ENCODE measurements at regions of chr2 and their contacts with region 1.

Region 1: DNA sequence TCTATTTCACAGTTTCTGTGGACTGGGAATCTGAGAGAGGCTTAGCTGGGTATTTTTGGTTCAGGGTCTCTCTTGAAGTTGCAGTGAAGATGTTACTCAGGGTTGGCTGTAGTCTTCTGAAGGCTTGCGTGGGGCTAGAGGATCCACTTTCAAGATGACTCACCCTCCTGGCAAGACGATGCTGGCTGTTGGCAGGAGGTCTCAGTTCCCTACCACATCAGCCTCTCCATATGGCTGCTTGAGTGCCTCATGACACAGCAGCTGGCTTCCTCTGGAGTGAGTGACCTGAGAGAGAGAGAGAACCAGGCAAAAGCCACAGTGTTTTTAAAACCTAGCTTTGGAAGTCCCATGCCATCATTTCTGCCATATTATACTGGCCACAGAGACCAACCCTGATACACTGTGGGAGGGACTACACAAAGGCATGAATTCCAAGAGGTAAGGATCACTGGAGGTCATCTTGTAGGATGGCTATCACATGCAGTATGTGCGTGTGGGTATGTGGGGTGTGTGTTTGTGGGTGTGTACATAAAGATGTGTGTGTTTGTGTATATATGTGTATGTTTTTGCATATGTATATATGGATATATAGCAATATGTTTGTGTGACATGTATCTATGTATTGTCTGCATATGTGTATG is 25.1 kb downstream of the DNPEP start:
- DNase-seq: peak; percentile 34
- ATAC-seq: peak; percentile 87
- H3K4me3 ChIP-seq: no peak overlapping the region
- H3K27ac ChIP-seq: no peak overlapping the region
- H3K4me1 ChIP-seq: peaks cover 4% of the 10 kb centered on the region; the same call in 1 of the 2 replicates
- H3K27me3 ChIP-seq: no peaks in the 10 kb centered on the region; a peak in 1 of 4 replicates
- CTCF ChIP-seq: no peak
- EP300 ChIP-seq: no peak
- POLR2A ChIP-seq: no peak
- RAD21 ChIP-seq: no peak

Region 2: DNA sequence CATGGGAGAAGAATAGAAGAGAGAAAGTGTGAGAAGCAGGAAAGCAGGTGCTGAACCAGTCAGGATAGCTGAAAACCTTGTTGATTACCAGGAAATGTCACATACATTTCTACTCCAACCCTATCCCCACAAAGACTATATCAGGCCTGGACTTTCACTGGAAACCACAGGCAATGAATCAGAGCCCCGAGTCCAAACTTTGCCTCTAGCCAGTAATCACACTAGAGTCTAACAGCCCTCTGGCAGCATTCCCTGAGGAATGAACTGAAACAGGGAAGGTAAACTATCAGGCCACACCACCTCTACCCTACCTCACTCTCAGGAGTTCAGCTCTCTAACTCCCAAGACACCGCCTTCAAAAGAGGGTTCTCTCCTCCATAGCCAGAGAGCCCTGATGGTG is 283.2 kb before region 1 on chr2:
- CTCF ChIA-PET with region 1: no interaction called
- POLR2A ChIA-PET with region 1: no interaction called
- RAD21 ChIA-PET with region 1: no interaction called
- SMC1A ChIA-PET with region 1: no interaction called
- in situ Hi-C with region 1: no loop called
- intact Hi-C with region 1: loop called (anchors 1 kb)
- DNase-seq: no peak
- ATAC-seq: no peak
- H3K4me3 ChIP-seq: no peak overlapping the region
- H3K27ac ChIP-seq: no peak overlapping the region
- H3K4me1 ChIP-seq: peaks cover 6% of the 10 kb centered on the region
- H3K27me3 ChIP-seq: no peaks in the 10 kb centered on the region
- CTCF ChIP-seq: no peak
- EP300 ChIP-seq: no peak
- POLR2A ChIP-seq: no peak
- RAD21 ChIP-seq: no peak

Region 3: DNA sequence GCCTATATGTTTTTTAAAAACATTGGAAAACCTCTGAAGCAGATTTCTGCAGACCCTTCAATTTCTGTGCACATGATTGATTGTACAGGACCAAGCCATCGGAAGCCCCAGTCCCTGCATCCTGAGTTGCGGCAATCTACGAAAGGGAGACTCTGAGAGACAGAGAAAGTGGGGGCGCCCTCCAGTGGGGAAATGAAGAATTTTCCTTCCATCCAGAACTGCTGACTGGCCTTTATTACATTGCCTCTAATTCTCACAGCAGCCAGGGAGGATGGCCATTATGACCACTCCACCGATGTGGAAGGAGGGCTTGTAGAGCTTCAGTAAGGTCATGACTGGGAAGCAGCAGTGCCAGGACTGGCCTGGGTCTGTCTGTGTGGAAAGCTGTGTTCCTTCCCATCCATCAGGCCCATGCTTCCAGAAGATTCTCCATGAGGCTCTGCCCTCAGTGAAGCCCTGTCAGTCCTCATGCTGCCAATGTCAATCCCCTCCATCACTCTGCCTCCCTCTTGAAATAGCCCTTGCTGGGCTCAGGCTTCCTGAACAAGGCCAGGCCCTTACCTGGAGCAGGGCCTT is 10.1 kb before region 1 on chr2:
- CTCF ChIA-PET with region 1: interaction called, 18 read pairs
- POLR2A ChIA-PET with region 1: no interaction called
- RAD21 ChIA-PET with region 1: no interaction called
- SMC1A ChIA-PET with region 1: interaction called, 3 read pairs
- in situ Hi-C with region 1: no loop called
- intact Hi-C with region 1: no loop called
- DNase-seq: no peak
- ATAC-seq: peak; percentile 97
- H3K4me3 ChIP-seq: no peak overlapping the region
- H3K27ac ChIP-seq: no peak overlapping the region
- H3K4me1 ChIP-seq: no peaks in the 10 kb centered on the region
- H3K27me3 ChIP-seq: peaks cover 0 to 2% of the 10 kb centered on the region in 2 experiments; a peak in 2 of 4 replicates
- CTCF ChIP-seq: peak; percentile 55 to 80 (median 73)
- EP300 ChIP-seq: no peak
- POLR2A ChIP-seq: no peak
- RAD21 ChIP-seq: peak; percentile 64

Measured in GM12878 (cell line).